Sigmoid colon (tissue), 7 donors: ENCODE measurements at regions of chr17 and their contacts with region 1.

Region 1: GRCh38 chr17:43400943-43401692 is 2.3 kb downstream of the ARL4D start:
- DNase-seq: peak; percentile 83
- H3K4me3 ChIP-seq: peak overlapping the region; percentile 69 to 90 (median 74)
- H3K27ac ChIP-seq: peak overlapping the region; percentile 90 to 96 (median 94)
- H3K4me1 ChIP-seq: peaks cover 6 to 54% (median 36%) of the 10 kb centered on the region in 4 donors
- H3K27me3 ChIP-seq: no peaks in the 10 kb centered on the region
- CTCF ChIP-seq: no peak
- EP300 ChIP-seq: peak in 2 of 4 donors; percentile 4 to 33
- POLR2A ChIP-seq: no peak

Region 2: DNA sequence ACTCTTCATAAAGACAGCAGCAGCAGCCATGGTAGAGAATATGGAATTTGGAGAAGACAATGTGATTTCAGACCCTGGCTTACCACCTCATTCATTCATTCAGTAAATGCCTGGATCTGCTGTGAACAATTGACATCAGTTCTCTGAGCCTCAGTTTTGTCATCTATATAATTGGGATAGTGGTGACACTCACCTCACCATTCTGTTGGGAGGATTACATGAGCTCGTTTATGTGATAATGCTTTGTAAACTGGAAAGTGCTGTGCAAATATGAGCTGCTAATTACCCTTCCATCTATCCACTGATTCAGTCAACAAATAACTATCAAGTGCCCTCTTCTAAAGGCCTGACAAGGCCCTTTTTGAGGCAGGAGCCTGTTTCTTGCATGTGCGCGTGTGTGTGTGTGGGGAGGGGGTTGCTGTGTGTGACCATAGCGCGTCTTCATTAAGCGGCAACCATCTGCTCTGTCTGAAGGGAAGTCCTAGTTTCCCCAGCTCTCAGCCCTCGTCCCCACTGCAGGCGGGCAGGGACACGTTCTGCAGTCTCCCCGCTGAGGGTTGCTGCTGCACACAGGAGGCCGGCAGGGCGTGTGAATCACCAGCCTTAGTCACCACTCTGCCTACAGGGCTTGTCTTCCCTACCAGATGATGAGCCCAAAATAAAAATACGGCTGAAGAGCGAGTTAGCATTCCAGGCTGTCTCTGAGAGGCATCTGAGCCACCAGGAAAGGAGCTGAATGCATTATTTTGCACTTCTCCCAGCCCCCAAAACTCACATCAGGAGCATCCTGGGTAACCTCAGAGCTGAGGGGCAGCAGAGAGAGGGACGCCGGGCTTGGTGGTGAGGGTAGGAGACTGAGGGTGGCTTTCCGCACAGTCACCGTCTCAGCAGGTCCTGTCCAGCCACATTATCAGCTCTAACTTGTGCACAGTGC is 17.6 kb after region 1 on chr17:
- intact Hi-C with region 1: loop called (anchors 2 kb)
- DNase-seq: peak; percentile 92
- H3K4me3 ChIP-seq: no peak overlapping the region
- H3K27ac ChIP-seq: peak overlapping the region; percentile 86 to 94 (median 90)
- H3K4me1 ChIP-seq: peaks cover 0 to 41% (median 38%) of the 10 kb centered on the region in 4 donors
- H3K27me3 ChIP-seq: no peaks in the 10 kb centered on the region
- CTCF ChIP-seq: no peak
- EP300 ChIP-seq: no peak
- POLR2A ChIP-seq: peak; percentile 32 to 59

Region 3: DNA sequence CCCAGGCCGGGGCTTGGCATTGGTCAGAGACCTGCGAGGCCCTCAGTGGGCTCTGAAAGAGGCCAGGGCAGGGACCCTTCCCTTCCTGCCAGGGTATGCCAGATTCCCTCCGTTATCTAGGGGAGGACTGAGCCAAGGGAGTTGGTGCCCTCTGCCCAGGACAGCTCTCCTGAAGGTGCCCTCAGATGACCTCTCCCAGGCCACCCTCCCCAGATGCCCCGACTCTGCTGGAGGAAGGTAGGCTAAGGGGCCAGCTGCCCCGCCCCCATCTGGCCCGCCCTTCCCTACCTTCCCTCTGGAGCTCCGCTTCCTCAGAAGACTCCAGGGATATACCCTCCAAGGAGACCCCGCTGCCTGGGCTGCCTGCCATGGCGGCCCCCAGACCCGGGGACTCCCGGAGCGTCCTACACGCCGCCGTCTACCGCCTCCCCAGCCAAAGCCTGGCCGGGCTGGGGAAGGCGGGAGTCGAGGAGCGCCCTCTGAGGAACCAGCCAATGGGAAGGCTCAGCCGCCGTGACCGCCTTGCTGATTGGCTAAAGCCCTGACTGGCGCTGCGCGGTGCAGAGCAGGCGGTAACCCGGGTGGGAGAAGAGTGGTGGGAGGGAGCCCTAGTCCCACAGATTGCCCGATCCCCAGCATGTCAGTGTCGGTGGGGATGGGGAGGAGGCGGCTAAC is 499.2 kb after region 1 on chr17:
- intact Hi-C with region 1: loop called (anchors 10 kb)
- DNase-seq: peak; percentile 92
- H3K4me3 ChIP-seq: peak overlapping the region; percentile 9 to 51 (median 44)
- H3K27ac ChIP-seq: no peak overlapping the region
- H3K4me1 ChIP-seq: peaks cover 0 to 25% (median 21%) of the 10 kb centered on the region in 4 donors
- H3K27me3 ChIP-seq: no peaks in the 10 kb centered on the region
- CTCF ChIP-seq: no peak
- EP300 ChIP-seq: no peak
- POLR2A ChIP-seq: no peak